HepG2 (cell line): ENCODE measurements at regions of chr2 and their contacts with region 1.

Region 1: GRCh38 chr2:215002500-215002899 is 135.9 kb downstream of the ABCA12 start:
- DNase-seq: peak; percentile 39
- ATAC-seq: peak; percentile 81
- H3K4me3 ChIP-seq: no peak overlapping the region
- H3K27ac ChIP-seq: no peak overlapping the region
- H3K4me1 ChIP-seq: no peaks in the 10 kb centered on the region
- H3K27me3 ChIP-seq: no peaks in the 10 kb centered on the region
- CTCF ChIP-seq: peak; percentile 74
- EP300 ChIP-seq: no peak
- POLR2A ChIP-seq: no peak
- RAD21 ChIP-seq: peak; percentile 57

Region 2: GRCh38 chr2:213251618-213252017 is 1750.9 kb before region 1 on chr2:
- CTCF ChIA-PET with region 1: no interaction called
- POLR2A ChIA-PET with region 1: no interaction called
- in situ Hi-C with region 1: loop called (anchors 25 kb)
- intact Hi-C with region 1: loop called (anchors 5 kb)
- DNase-seq: peak; percentile 72
- ATAC-seq: peak; percentile 74
- H3K4me3 ChIP-seq: no peak overlapping the region
- H3K27ac ChIP-seq: no peak overlapping the region
- H3K4me1 ChIP-seq: peaks cover 24% of the 10 kb centered on the region
- H3K27me3 ChIP-seq: no peaks in the 10 kb centered on the region
- CTCF ChIP-seq: peak; percentile 78
- EP300 ChIP-seq: no peak
- POLR2A ChIP-seq: no peak
- RAD21 ChIP-seq: peak; percentile 67

Region 3: DNA sequence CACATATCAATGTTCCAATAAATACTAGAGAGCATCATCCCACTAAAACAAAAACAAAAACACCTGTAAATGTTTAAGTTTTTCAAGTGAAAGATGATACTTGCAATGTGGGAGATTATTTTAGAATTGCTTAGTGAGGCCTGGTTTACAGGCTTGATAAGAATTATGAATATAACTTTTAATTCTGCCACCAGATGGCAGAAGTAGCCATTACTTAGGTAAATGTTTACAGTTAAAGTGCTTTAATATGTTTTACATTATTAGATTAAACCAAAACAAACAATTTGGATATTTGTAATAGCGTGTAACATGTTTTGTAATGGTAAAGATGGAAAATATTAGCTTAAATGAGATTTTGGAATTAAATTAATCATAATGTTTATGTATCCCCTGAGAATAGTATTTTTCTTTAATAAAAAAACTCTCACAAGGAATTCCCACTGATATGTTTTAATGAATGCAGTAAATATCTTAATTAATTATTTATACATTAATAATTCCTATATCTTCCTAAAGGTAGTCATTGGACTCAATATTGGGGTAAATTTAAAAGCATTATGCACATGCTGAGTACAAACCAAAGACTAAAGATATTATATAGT is 1196.3 kb before region 1 on chr2:
- CTCF ChIA-PET with region 1: interaction called, 6 read pairs
- POLR2A ChIA-PET with region 1: no interaction called
- in situ Hi-C with region 1: loop called (anchors 25 kb)
- intact Hi-C with region 1: loop called (anchors 1 kb)
- DNase-seq: peak; percentile 9
- ATAC-seq: no peak
- H3K4me3 ChIP-seq: no peak overlapping the region
- H3K27ac ChIP-seq: no peak overlapping the region
- H3K4me1 ChIP-seq: no peaks in the 10 kb centered on the region
- H3K27me3 ChIP-seq: no peaks in the 10 kb centered on the region
- CTCF ChIP-seq: 0 out of 2 replicates have a peak, but pooled peaks have one; percentile 5
- EP300 ChIP-seq: no peak
- POLR2A ChIP-seq: no peak
- RAD21 ChIP-seq: no peak

Region 4: GRCh38 chr2:213934560-213934959 is 1067.9 kb before region 1 on chr2:
- CTCF ChIA-PET with region 1: no interaction called
- POLR2A ChIA-PET with region 1: no interaction called
- in situ Hi-C with region 1: no loop called
- intact Hi-C with region 1: loop called (anchors 10 kb)
- DNase-seq: peak; percentile 44
- ATAC-seq: peak; percentile 87
- H3K4me3 ChIP-seq: peak overlapping the region in 1 of 3 experiments; percentile 11; a peak in 2 of 6 replicates
- H3K27ac ChIP-seq: no peak overlapping the region
- H3K4me1 ChIP-seq: no peaks in the 10 kb centered on the region
- H3K27me3 ChIP-seq: no peaks in the 10 kb centered on the region; a peak in 1 of 5 replicates
- CTCF ChIP-seq: peak; percentile 60
- EP300 ChIP-seq: no peak
- POLR2A ChIP-seq: no peak
- RAD21 ChIP-seq: no peak

Region 5: GRCh38 chr2:214310319-214310718 is 692.2 kb before region 1 on chr2:
- CTCF ChIA-PET with region 1: interaction called, 6 read pairs
- POLR2A ChIA-PET with region 1: no interaction called
- in situ Hi-C with region 1: no loop called
- intact Hi-C with region 1: loop called (anchors 1 kb)
- DNase-seq: peak; percentile 7
- ATAC-seq: peak; percentile 80
- H3K4me3 ChIP-seq: no peak overlapping the region
- H3K27ac ChIP-seq: no peak overlapping the region
- H3K4me1 ChIP-seq: no peaks in the 10 kb centered on the region
- H3K27me3 ChIP-seq: no peaks in the 10 kb centered on the region
- CTCF ChIP-seq: peak; percentile 41
- EP300 ChIP-seq: no peak
- POLR2A ChIP-seq: no peak
- RAD21 ChIP-seq: no peak

Region 6: GRCh38 chr2:214587442-214587841 is 415.1 kb before region 1 on chr2:
- CTCF ChIA-PET with region 1: no interaction called
- POLR2A ChIA-PET with region 1: no interaction called
- in situ Hi-C with region 1: no loop called
- intact Hi-C with region 1: loop called (anchors 5 kb)
- DNase-seq: peak; percentile 9
- ATAC-seq: peak; percentile 79
- H3K4me3 ChIP-seq: no peak overlapping the region
- H3K27ac ChIP-seq: no peak overlapping the region
- H3K4me1 ChIP-seq: no peaks in the 10 kb centered on the region
- H3K27me3 ChIP-seq: no peaks in the 10 kb centered on the region
- CTCF ChIP-seq: peak; percentile 43
- EP300 ChIP-seq: no peak
- POLR2A ChIP-seq: no peak
- RAD21 ChIP-seq: no peak

Region 7: DNA sequence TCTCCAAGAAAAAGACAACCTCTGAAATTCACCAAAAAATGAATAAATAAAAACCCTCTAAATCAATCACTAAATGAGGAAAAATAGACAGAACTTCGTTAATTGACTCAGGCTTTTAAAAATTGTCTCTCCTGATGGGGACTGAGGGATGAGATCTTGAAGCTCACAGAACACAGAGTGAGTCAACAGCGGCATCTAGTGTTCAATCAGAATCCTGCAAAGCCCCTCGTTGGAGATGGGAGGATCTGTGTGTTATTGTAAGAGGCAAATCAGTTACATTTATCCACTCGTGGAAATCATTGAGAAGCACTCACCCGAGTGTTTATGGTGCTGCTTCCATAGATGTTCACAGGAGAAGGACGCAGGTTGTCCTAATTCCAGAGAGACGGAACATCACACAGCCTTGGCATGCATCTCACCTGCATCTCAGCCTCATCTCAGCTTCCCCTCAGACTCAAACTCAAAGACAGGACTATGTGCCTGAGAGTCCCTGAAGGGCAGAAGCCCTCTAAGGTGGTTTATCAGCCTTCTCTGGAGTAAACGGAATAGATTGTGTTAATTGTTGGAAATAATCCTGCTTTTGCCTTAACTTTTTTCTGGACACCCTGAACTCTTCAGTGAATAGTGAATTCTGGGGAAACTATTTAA is 928.9 kb after region 1 on chr2:
- CTCF ChIA-PET with region 1: no interaction called
- POLR2A ChIA-PET with region 1: no interaction called
- in situ Hi-C with region 1: no loop called
- intact Hi-C with region 1: loop called (anchors 2 kb)
- DNase-seq: peak; percentile 80
- ATAC-seq: peak; percentile 93
- H3K4me3 ChIP-seq: no peak overlapping the region
- H3K27ac ChIP-seq: no peak overlapping the region
- H3K4me1 ChIP-seq: peaks cover 34% of the 10 kb centered on the region
- H3K27me3 ChIP-seq: no peaks in the 10 kb centered on the region
- CTCF ChIP-seq: peak; percentile 95
- EP300 ChIP-seq: no peak
- POLR2A ChIP-seq: no peak
- RAD21 ChIP-seq: peak; percentile 93